ENCODE measurements at regions of chr3 and their contacts with region 1.

Region 1: GRCh38 chr3:32249184-32249782 is 10.8 kb downstream of the CMTM8 start:
- H3K4me3 ChIP-seq: no peak overlapping the region
- H3K27ac ChIP-seq: no peak overlapping the region
- H3K4me1 ChIP-seq: no peaks in the 10 kb centered on the region; the same call in 1 of the 2 replicates
- CTCF ChIP-seq: no peak

Region 2: GRCh38 chr3:31768479-31769123 is 480.7 kb before region 1 on chr3:
- CTCF ChIA-PET with region 1: no interaction called
- POLR2A ChIA-PET with region 1: no interaction called
- H3K4me3 ChIP-seq: no peak overlapping the region
- H3K27ac ChIP-seq: no peak overlapping the region
- H3K4me1 ChIP-seq: no peaks in the 10 kb centered on the region
- CTCF ChIP-seq: no peak

Region 3: DNA sequence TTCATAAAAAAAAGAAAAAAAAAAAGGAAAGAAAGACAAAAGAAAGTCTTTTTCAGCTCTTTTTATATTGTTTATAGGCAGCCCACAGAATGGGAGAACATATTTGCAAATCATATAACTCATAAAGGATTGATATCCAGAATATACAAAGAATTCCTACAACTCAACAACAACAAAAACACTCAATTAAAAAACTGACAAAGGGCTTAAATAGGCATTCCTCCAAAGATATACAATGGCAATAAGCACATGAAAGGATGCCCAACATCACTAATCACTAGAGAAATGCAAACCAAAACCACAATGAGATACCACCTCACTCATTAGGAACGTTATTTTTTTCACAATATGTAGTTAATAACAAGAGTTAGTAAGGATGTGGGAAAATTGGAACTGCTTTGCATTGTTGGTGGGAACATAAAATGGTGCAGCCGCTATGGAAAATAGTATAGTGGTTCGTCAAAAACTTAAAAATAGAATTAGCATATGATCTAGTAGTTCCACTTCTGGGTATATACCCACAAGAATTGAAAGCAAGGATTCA is 65.0 kb before region 1 on chr3:
- CTCF ChIA-PET with region 1: no interaction called
- POLR2A ChIA-PET with region 1: no interaction called
- H3K4me3 ChIP-seq: no peak overlapping the region
- H3K27ac ChIP-seq: no peak overlapping the region
- H3K4me1 ChIP-seq: no peaks in the 10 kb centered on the region
- CTCF ChIP-seq: no peak

Region 4: GRCh38 chr3:32200490-32200889 is 48.8 kb before region 1 on chr3:
- CTCF ChIA-PET with region 1: no interaction called
- POLR2A ChIA-PET with region 1: no interaction called
- H3K4me3 ChIP-seq: no peak overlapping the region
- H3K27ac ChIP-seq: no peak overlapping the region
- H3K4me1 ChIP-seq: no peaks in the 10 kb centered on the region
- CTCF ChIP-seq: no peak

Region 5: DNA sequence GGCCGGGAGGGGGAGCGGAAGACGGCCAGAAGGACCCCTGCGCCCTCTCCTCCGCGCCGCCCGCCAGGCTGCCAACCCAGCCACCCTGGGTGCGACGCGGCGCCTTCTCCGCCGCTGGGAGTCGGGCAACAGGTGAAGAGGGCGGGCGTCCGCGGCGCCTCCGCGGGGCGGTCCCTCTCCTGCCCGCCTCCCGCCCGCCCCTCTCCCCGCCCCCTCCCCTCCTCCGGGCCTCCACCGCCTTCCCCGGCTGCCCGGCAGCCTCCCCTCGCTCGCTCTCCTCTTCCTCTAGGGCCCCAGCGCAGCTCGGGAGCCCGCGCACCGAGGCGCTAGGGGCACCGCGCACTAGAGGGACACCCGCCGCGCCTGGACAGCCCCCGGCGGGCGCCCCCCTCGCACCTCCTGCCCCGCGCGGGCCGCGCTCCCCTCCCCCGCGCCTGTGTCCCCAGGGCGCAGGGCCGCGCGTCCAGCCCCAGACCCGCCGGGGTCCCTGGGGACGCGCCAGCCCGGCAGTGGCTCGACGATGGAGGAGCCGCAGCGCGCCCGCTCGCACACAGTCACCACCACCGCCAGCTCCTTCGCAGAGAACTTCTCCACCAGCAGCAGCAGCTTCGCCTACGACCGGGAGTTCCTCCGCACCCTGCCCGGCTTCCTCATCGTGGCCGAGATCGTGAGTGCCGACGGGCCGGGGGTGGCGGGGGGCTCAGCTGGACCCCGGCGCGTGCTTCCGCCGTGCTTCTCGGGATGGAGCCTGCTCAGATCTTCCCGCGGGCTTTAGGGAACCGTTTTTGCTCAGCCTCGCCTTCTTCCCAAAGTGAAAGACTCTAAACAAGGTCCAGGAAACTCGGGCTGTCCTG is 10.6 kb before region 1 on chr3 and contains the start of gene CMTM8:
- CTCF ChIA-PET with region 1: interaction called, 10 read pairs
- POLR2A ChIA-PET with region 1: no interaction called
- H3K4me3 ChIP-seq: peak within 1 kb of the TSS; percentile 79
- H3K27ac ChIP-seq: peak within 1 kb of the TSS; percentile 40; the same call in 1 of the 2 replicates
- H3K4me1 ChIP-seq: no peaks in the 10 kb centered on the region
- CTCF ChIP-seq: no peak

Region 6: GRCh38 chr3:32366638-32367397 is 117.5 kb after region 1 on chr3:
- CTCF ChIA-PET with region 1: no interaction called
- POLR2A ChIA-PET with region 1: no interaction called
- H3K4me3 ChIP-seq: no peak overlapping the region
- H3K27ac ChIP-seq: no peak overlapping the region
- H3K4me1 ChIP-seq: no peaks in the 10 kb centered on the region
- CTCF ChIP-seq: no peak

Measured in HEK293 (cell line).